SK-N-SH (cell line): ENCODE measurements at regions of chr11 and their contacts with region 1.

Region 1: DNA sequence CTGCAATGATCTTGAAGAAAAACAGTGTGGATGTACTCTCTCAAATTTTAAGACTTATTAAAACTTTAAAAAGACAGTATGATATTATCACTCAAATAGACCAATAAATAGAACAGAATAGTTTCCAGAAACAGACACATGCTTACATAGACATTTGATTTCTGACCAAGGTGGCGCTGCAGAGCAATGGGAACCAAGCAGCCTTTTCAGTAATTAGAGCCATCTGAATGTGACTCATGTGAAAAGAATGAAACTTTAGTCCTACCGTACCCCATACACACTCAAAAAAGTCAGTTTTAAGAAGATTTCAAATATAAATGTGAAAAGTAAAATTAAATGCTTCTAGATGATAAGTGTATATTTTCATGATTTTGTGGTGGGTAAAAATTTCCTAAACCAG is 74.2 kb upstream of the MS4A8 start:
- DNase-seq: peak; percentile 14
- H3K4me3 ChIP-seq: no peak overlapping the region
- H3K27ac ChIP-seq: no peak overlapping the region
- H3K4me1 ChIP-seq: no peaks in the 10 kb centered on the region
- H3K27me3 ChIP-seq: no peaks in the 10 kb centered on the region
- CTCF ChIP-seq: peak; percentile 66
- EP300 ChIP-seq: no peak
- RAD21 ChIP-seq: no peak

Region 2: GRCh38 chr11:60363542-60364510 is 261.4 kb before region 1 on chr11:
- CTCF ChIA-PET with region 1: interaction called, 21 read pairs
- POLR2A ChIA-PET with region 1: no interaction called
- DNase-seq: peak; percentile 40
- H3K4me3 ChIP-seq: no peak overlapping the region
- H3K27ac ChIP-seq: no peak overlapping the region
- H3K4me1 ChIP-seq: no peaks in the 10 kb centered on the region
- H3K27me3 ChIP-seq: peaks cover 18% of the 10 kb centered on the region
- CTCF ChIP-seq: peak; percentile 73
- EP300 ChIP-seq: no peak
- RAD21 ChIP-seq: peak; percentile 61

Region 3: DNA sequence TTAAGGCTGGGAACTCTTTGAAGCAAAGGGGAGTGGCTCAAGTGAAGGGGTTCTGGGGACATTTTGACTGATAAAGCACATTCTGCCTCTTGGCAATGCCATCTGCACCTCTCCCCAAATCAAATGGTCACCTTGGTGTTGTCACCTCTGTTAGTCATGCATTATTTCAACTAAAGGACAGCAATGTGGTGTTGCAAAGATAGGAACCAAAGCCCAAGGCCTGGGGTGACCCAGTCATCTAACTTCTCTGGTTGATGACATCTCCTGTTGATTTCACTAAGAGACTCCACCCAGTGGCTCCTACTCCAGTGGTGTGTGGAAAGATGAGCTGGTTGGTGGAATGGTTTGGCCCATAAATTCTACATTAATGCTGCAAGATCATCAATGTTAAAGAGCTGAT is 177.4 kb before region 1 on chr11:
- CTCF ChIA-PET with region 1: no interaction called
- POLR2A ChIA-PET with region 1: no interaction called
- DNase-seq: no peak
- H3K4me3 ChIP-seq: no peak overlapping the region
- H3K27ac ChIP-seq: no peak overlapping the region
- H3K4me1 ChIP-seq: no peaks in the 10 kb centered on the region
- H3K27me3 ChIP-seq: no peaks in the 10 kb centered on the region
- CTCF ChIP-seq: no peak
- EP300 ChIP-seq: no peak
- RAD21 ChIP-seq: no peak

Region 4: GRCh38 chr11:60607483-60607882 is 17.8 kb before region 1 on chr11:
- CTCF ChIA-PET with region 1: no interaction called
- POLR2A ChIA-PET with region 1: no interaction called
- DNase-seq: no peak
- H3K4me3 ChIP-seq: no peak overlapping the region
- H3K27ac ChIP-seq: no peak overlapping the region
- H3K4me1 ChIP-seq: no peaks in the 10 kb centered on the region
- H3K27me3 ChIP-seq: no peaks in the 10 kb centered on the region; the same call in 1 of the 2 replicates
- CTCF ChIP-seq: peak; percentile 18; the same call in 1 of the 2 replicates
- EP300 ChIP-seq: no peak
- RAD21 ChIP-seq: no peak